ENCODE measurements at regions of chr1 and their contacts with region 1.

Region 1: GRCh38 chr1:9362488-9362887 is 69.8 kb downstream of the SPSB1 start:
- DNase-seq: peak in 2 of 10 donors; percentile 25 to 45
- H3K4me3 ChIP-seq: peak overlapping the region in 6 of 59 donors; percentile 4 to 17 (median 10)
- H3K27ac ChIP-seq: peak overlapping the region in 57 of 59 donors; percentile 15 to 93 (median 82)
- H3K27me3 ChIP-seq: no peaks in the 10 kb centered on the region
- CTCF ChIP-seq: no peak

Region 2: GRCh38 chr1:9326596-9326995 is 35.9 kb before region 1 on chr1:
- intact Hi-C with region 1: loop called in 1 of 2 experiments (anchors 2 kb)
- DNase-seq: no peak
- H3K4me3 ChIP-seq: no peak overlapping the region
- H3K27ac ChIP-seq: peak overlapping the region in 13 of 59 donors; percentile 6 to 85 (median 36)
- H3K27me3 ChIP-seq: no peaks in the 10 kb centered on the region
- CTCF ChIP-seq: no peak

Region 3: DNA sequence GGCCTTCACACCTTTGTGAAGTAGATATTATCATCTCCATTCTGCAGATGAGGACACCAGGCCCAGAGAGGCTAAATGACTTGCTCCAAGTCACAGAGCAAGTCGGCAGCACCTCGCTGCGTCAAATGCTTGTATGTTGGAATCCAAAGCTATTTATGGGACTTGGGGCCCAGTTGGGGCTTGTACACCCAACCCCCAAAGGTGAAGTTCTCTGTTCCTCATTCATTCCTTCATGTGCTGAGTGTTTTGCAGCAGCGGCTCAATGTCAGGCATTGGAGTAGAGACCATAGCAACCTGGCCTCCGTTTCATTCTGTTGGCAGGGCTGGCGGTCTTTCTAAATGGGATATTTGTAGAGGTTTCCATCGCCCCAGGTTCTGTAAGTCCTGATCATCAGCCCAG is 63.4 kb after region 1 on chr1:
- intact Hi-C with region 1: no loop called
- DNase-seq: no peak
- H3K4me3 ChIP-seq: no peak overlapping the region
- H3K27ac ChIP-seq: peak overlapping the region in 18 of 59 donors; percentile 4 to 61 (median 31)
- H3K27me3 ChIP-seq: no peaks in the 10 kb centered on the region
- CTCF ChIP-seq: no peak

Measured in dorsolateral prefrontal cortex (tissue), 120 donors.